Mammary epithelial cell (primary cell): ENCODE measurements at regions of chr2 and their contacts with region 1.

Region 1: DNA sequence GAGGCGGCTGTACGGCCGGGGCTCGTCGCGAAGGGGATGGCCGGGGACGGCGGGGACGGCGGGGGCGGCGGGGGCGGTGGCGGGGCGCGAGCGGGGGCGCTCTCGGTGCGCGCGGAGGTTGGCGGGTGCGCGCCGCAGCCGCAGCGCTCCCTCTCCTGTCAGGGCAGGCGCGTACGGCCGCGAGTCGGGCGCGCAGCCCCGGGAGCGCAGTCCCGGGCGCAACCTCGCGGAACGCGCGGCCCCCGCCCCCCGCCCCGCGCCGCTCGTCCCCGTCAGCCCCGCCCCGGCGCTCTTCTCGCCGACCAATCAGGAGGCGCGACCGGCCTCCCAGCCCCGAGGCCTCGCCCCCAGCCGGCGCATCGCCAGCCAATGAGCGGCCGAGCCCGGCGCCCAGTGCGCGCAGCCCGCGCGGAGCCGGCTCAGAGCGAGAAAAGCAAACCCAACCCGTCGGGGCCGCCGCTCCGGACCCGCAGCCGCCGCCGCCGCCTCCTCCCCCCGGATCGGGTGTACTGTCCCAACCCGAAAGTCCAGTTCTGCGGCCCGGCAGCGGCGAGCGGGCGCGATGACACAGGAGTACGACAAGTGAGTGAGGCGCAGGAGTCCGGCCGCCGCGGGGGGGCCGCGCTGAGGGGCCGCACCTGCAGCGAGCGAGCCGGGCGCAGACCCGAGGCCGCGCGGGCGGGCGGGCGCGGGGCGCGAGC is at the start of gene GRHL1:
- DNase-seq: peak; percentile 91
- H3K4me3 ChIP-seq: peak within 1 kb of the TSS; percentile 68 to 78 (median 69)
- H3K27ac ChIP-seq: no peak within 1 kb of the TSS
- H3K4me1 ChIP-seq: peaks cover 10% of the 10 kb centered on the region
- H3K27me3 ChIP-seq: peaks cover 2% of the 10 kb centered on the region
- CTCF ChIP-seq: no peak
- total RNA-seq, gene GRHL1: 2.2 to 6.0 TPM

Region 2: DNA sequence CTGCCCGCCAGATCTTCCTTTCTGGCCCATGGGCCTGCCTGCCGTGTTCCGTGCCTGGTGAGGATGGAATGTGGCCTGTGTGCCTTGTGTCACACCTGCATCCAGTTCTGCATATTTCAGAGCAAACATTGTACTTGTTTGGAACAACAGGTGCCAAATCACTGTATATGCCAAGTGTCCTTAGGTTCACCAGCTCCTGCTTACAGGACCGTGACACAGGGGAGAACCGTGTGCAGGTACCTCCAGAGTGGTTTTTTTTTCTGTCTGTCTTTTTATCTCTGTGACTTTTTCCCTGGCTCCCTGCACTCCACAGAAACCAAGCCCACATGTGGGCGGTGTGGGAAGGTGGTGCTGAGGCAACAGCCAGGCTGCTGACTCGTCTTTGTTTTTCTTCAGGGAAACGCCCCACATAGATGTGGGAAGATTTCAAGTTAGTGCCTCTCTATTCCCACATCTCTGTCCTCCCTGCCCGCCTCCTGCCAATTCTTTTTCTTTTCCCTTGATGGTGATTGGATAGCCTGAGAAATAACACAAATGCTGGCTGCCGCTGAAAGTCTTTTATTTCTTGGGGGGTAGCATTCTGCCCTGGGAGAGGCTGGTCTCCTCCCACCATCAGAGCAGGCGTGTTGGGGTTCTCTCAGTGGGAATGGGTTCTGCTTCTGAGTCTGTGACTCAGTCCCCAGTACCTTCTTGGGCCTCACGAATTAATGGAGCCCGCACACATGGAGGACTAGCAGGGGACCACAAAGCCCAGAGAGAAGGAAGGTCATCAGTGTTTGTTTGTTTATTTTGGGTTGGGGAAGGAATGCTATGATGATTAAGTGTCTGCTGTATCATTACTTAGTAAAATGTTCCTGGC is 21.4 kb after region 1 on chr2:
- CTCF ChIA-PET with region 1: no interaction called
- dilution Hi-C with region 1: no loop called
- in situ Hi-C with region 1: no loop called
- intact Hi-C with region 1: loop called (anchors 1 kb)
- DNase-seq: peak; percentile 84
- H3K4me3 ChIP-seq: no peak overlapping the region
- H3K27ac ChIP-seq: no peak overlapping the region
- H3K4me1 ChIP-seq: peaks cover 19% of the 10 kb centered on the region
- H3K27me3 ChIP-seq: no peaks in the 10 kb centered on the region
- CTCF ChIP-seq: no peak